H1 (cell line): ENCODE measurements at regions of chr17 and their contacts with region 1.

Region 1: GRCh38 chr17:78412403-78412802 is 34.0 kb downstream of the PGS1 start:
- DNase-seq: no peak
- H3K4me3 ChIP-seq: no peak overlapping the region
- H3K27ac ChIP-seq: no peak overlapping the region
- H3K4me1 ChIP-seq: peaks cover 0 to 16% (median 7%) of the 10 kb centered on the region in 4 experiments; a peak in 5 of 7 replicates
- H3K27me3 ChIP-seq: no peaks in the 10 kb centered on the region
- CTCF ChIP-seq: peak; percentile 33 to 74 (median 68)
- EP300 ChIP-seq: no peak
- POLR2A ChIP-seq: no peak
- RAD21 ChIP-seq: peak; percentile 15 to 43; a peak in 3 of 4 replicates

Region 2: DNA sequence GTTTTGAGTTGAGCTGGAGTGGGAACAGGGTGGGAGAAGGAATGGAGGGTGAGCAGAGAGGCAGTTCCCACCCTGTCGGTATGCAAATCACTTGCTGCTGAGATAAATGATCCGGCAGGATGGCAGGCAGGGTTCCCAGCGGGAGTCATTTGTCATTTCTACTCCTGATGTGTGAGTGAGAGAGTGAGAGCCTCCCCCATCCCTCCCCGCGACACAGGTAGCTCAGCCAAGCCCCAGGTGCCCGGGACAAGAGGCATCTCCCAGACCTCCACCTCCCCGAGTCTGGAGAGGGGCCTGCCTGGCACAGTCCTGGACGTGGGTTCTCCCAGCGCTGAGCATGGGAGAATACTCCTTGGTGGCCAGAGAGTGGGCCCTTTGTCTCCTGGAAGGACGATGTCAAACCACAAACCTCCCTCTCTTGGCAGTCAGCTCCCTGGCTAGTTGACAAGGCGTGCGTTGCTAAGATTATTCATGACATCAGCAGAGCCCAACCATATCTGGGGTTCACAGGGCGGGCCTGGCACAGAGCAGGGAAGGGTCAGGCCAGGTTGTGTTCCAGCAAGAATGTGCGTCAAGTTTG is 487.6 kb before region 1 on chr17:
- CTCF ChIA-PET with region 1: no interaction called
- POLR2A ChIA-PET with region 1: no interaction called
- DNase-seq: peak; percentile 62 to 80
- H3K4me3 ChIP-seq: peak overlapping the region in 3 of 4 experiments; percentile 7 to 24 (median 20); a peak in 2 of 8 replicates
- H3K27ac ChIP-seq: no peak overlapping the region
- H3K4me1 ChIP-seq: peaks cover 12 to 38% (median 29%) of the 10 kb centered on the region in 4 experiments
- H3K27me3 ChIP-seq: no peaks in the 10 kb centered on the region; a peak in 1 of 7 replicates
- CTCF ChIP-seq: no peak
- EP300 ChIP-seq: no peak; a peak in 1 of 3 replicates
- POLR2A ChIP-seq: no peak
- RAD21 ChIP-seq: no peak

Region 3: DNA sequence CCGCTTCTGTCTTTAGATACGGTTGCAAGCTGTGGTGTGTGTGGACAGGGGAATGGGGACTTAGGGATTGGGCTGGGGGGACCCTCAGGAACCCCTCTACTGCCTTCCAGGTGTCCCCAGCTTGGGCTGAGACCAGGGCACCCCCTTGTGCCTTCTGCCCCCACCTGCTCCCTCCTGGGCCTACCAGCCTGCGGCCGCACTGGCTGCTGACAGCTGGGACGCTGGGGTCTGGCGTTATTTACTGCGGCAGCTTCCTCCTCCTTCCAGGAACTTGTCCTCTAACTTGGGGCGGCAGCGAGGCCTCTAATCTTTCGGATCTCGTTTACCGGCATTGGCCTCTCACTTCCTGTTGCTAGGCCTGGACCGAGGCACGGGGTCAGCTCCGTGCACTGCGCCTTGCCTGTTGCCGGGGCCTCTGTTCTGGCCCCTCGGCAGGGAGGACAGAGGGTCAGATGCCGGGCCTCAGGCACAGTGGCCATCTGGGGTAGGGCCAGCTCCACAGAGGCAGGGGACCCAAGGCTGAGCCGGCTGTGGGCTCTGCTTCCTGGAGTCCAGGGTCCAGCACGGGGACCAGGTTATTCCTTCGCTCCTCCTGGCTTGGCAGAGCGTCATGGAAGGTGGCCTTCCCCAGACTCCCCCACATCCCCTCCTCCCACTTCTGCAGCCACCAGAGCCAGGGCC is 149.2 kb before region 1 on chr17:
- CTCF ChIA-PET with region 1: no interaction called
- POLR2A ChIA-PET with region 1: no interaction called
- DNase-seq: peak in 1 of 2 experiments; percentile 49
- H3K4me3 ChIP-seq: no peak overlapping the region
- H3K27ac ChIP-seq: no peak overlapping the region
- H3K4me1 ChIP-seq: peaks cover 0 to 29% (median 22%) of the 10 kb centered on the region in 4 experiments; a peak in 6 of 7 replicates
- H3K27me3 ChIP-seq: no peaks in the 10 kb centered on the region; a peak in 2 of 7 replicates
- CTCF ChIP-seq: no peak
- EP300 ChIP-seq: no peak
- POLR2A ChIP-seq: no peak
- RAD21 ChIP-seq: no peak

Region 4: GRCh38 chr17:78397681-78398101 is 14.7 kb before region 1 on chr17:
- CTCF ChIA-PET with region 1: interaction called, 28 read pairs
- POLR2A ChIA-PET with region 1: interaction called, 5 read pairs
- DNase-seq: no peak
- H3K4me3 ChIP-seq: no peak overlapping the region
- H3K27ac ChIP-seq: no peak overlapping the region
- H3K4me1 ChIP-seq: no peaks in the 10 kb centered on the region
- H3K27me3 ChIP-seq: no peaks in the 10 kb centered on the region
- CTCF ChIP-seq: no peak
- EP300 ChIP-seq: no peak
- POLR2A ChIP-seq: no peak
- RAD21 ChIP-seq: no peak